T-cell (primary cell): ENCODE measurements at regions of chr1 and their contacts with region 1.

Region 1: GRCh38 chr1:27772933-27773825 is at the start of gene STX12:
- DNase-seq: peak; percentile 96 to 100 (median 98)
- ATAC-seq: peak; percentile 93 to 96 (median 94)
- H3K4me3 ChIP-seq: peak within 1 kb of the TSS; percentile 82 to 86
- H3K4me3 Mint-ChIP-seq: peak within 1 kb of the TSS; percentile 84 to 98 (median 93)
- H3K27ac ChIP-seq: peak within 1 kb of the TSS; percentile 91
- H3K27ac Mint-ChIP-seq: peak within 1 kb of the TSS; percentile 97 to 98
- H3K4me1 ChIP-seq: peaks cover 15 to 19% of the 10 kb centered on the region in 2 experiments
- H3K4me1 Mint-ChIP-seq: peaks cover 29 to 38% (median 36%) of the 10 kb centered on the region in 3 donors
- H3K27me3 ChIP-seq: no peaks in the 10 kb centered on the region
- H3K27me3 Mint-ChIP-seq: no peaks in the 10 kb centered on the region
- total RNA-seq, gene STX12: 21.2 to 31.4 (median 27.4) TPM

Region 2: DNA sequence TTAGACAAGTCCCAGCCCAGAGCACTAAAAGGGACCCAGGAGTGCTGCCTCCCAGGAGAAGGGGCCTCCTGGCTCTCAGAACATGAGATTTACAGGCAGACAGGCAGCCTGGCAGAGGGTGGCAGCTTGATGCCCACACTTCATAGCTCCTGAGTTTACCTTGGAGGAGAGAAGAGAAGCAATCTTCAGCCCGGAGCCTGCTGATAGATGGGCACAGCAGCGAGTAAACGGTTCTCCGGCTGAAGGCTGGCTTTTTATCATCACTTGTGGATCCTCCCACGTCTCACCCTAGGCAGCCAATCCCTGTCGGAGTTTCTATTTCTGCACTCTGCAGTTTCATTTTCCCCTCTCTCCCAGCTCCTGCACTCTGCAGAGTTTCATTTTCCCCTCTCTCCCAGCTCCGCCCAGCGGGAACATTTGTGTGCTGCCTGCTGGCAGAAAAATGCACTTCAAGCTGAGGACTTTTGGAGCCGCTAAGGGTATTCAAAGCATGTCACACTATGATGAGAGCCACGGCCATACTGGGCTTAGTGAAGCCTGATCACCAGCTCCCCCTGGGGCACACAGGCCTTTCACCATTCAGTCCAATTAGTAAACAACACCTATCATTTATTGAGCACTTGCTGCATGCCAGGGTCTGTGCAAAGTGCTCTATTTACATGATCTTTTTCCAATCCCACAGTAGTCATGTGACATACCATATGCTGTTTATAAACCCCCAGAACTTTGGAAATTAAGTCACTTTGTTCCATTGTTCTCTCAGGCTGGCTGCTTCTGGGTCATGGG is 101.0 kb before region 1 on chr1 and contains the start of gene IFI6:
- CTCF ChIA-PET with region 1: interaction called, 3 to 11 read pairs
- POLR2A ChIA-PET with region 1: no interaction called
- DNase-seq: peak; percentile 54 to 90 (median 71)
- ATAC-seq: peak; percentile 91 to 95 (median 93)
- H3K4me3 ChIP-seq: peak within 1 kb of the TSS; percentile 58 to 71
- H3K4me3 Mint-ChIP-seq: peak within 1 kb of the TSS; percentile 89 to 97 (median 95)
- H3K27ac ChIP-seq: peak within 1 kb of the TSS; percentile 91
- H3K27ac Mint-ChIP-seq: peak within 1 kb of the TSS; percentile 98 to 99
- H3K4me1 ChIP-seq: peaks cover 12 to 42% of the 10 kb centered on the region in 2 experiments
- H3K4me1 Mint-ChIP-seq: peaks cover 32 to 46% (median 43%) of the 10 kb centered on the region in 3 donors
- H3K27me3 ChIP-seq: no peaks in the 10 kb centered on the region
- H3K27me3 Mint-ChIP-seq: no peaks in the 10 kb centered on the region
- total RNA-seq, gene IFI6: 28.2 to 52.1 (median 40.7) TPM

Region 3: DNA sequence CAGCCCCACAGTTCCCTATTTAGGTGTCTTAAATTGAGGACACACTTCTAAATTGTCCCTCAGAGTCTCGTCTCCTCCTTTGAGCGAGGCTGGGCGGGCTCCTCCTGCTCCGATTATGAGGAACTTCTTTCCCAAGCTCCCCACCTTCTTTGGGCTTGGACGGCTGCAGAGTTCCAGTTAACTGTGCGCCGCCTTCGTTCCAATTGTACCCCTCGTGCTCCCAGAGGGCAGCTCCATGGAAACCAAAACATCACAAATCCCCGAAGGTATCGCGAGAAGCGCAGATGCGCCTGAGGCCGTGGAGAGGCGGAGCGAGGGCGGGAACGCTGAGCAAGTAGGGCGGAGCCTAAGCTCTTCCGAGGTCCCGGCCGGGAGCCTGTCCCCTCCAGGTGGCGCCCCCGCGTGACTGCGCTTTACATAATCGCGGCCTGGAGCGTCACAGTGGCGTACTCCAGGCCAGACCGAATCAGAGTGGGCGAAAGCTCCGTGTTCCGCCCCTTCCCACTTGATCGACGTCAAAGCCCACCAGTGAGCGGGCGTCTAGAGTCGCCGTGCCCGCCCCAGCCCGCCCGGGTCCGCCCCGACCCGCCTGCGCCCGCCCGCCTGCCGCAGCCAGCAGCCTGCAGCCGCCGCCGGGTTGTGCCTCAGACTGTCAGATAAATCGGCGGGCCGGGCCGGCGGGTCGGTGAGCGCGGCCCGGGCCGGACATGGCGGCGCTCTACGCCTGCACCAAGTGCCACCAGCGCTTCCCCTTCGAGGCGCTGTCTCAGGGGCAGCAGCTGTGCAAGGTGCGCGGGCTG is 47.6 kb before region 1 on chr1 and contains the start of gene FAM76A:
- CTCF ChIA-PET with region 1: interaction called in 1 of 2 experiments, 20 read pairs
- POLR2A ChIA-PET with region 1: interaction called, 3 to 25 read pairs
- DNase-seq: peak; percentile 98 to 100 (median 99)
- ATAC-seq: peak; percentile 91 to 97 (median 94)
- H3K4me3 ChIP-seq: peak within 1 kb of the TSS; percentile 72 to 81
- H3K4me3 Mint-ChIP-seq: peak within 1 kb of the TSS; percentile 84 to 87 (median 87)
- H3K27ac ChIP-seq: peak within 1 kb of the TSS; percentile 85
- H3K27ac Mint-ChIP-seq: peak within 1 kb of the TSS; percentile 95 to 96
- H3K4me1 ChIP-seq: peaks cover 4 to 17% of the 10 kb centered on the region in 2 experiments
- H3K4me1 Mint-ChIP-seq: peaks cover 23 to 28% (median 26%) of the 10 kb centered on the region in 3 donors
- H3K27me3 ChIP-seq: no peaks in the 10 kb centered on the region
- H3K27me3 Mint-ChIP-seq: no peaks in the 10 kb centered on the region
- total RNA-seq, gene FAM76A: 18.1 to 23.4 (median 21.2) TPM

Region 4: DNA sequence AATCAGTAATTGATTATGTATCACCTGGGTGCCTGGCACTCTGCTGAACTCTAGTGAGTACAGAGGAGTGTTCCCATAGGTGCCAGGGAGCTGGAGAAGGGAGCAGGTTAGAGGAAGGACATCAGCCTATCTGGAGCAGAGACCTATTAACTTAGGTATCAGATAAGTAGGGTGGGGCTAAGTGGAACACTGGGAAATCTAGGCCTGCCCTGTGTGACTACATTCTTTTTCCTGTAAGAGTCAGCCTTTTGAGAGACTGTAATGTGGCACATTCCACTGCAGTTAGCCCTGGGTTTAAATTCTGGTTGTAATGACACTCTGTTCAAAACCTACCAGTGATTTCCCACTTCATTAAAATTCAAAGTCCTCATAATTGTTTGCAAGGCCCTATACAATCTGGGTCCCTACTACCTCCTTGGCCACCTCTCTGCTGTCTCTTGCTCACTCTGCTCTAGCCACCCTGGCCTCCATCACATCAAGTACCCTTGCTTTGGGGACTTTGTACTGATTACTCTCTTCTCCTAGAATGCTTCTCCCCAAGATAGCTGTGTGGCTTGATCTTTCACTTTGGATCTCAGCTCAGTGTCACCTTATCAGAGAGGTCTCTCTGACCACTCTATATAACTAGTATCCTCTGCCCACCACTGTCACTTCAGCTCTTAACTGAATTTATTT is 12.7 kb after region 1 on chr1:
- CTCF ChIA-PET with region 1: interaction called in 1 of 2 experiments, 3 read pairs
- POLR2A ChIA-PET with region 1: interaction called in 1 of 2 experiments, 11 read pairs
- DNase-seq: no peak
- ATAC-seq: no peak
- H3K4me3 ChIP-seq: no peak overlapping the region
- H3K4me3 Mint-ChIP-seq: no peak overlapping the region
- H3K27ac ChIP-seq: no peak overlapping the region
- H3K27ac Mint-ChIP-seq: peak overlapping the region; percentile 20 to 75
- H3K4me1 ChIP-seq: no peaks in the 10 kb centered on the region
- H3K4me1 Mint-ChIP-seq: peaks cover 26% of the 10 kb centered on the region in 3 donors
- H3K27me3 ChIP-seq: no peaks in the 10 kb centered on the region
- H3K27me3 Mint-ChIP-seq: no peaks in the 10 kb centered on the region

Region 5: DNA sequence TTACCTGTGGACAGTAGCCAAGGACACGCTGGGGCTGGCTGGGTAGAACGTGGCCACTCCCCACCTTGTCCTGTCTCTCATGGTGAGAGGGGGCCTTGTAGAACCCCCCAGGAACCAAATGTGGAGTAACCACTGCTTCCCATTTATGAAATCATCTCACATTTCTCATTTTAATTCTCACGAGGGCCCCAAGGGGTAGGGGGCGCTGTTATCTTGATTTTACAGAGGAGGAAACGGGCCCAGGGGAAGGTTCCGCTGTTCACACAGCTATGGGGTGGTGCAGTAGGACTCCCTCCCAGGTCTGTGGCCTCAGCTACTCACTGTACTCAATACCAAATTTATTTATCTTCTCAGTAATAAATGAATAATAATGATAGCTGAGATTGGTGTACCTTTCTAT is 167.1 kb after region 1 on chr1:
- CTCF ChIA-PET with region 1: interaction called in 1 of 2 experiments, 10 read pairs
- POLR2A ChIA-PET with region 1: no interaction called
- DNase-seq: peak; percentile 58 to 84 (median 74)
- ATAC-seq: peak; percentile 80 to 89 (median 86)
- H3K4me3 ChIP-seq: no peak overlapping the region
- H3K4me3 Mint-ChIP-seq: no peak overlapping the region
- H3K27ac ChIP-seq: peak overlapping the region; percentile 52
- H3K27ac Mint-ChIP-seq: peak overlapping the region; percentile 77 to 79
- H3K4me1 ChIP-seq: peaks cover 11 to 31% of the 10 kb centered on the region in 2 experiments
- H3K4me1 Mint-ChIP-seq: peaks cover 24 to 51% (median 49%) of the 10 kb centered on the region in 3 donors
- H3K27me3 ChIP-seq: peaks cover 0 to 8% of the 10 kb centered on the region in 2 experiments
- H3K27me3 Mint-ChIP-seq: peaks cover 6 to 7% of the 10 kb centered on the region in 2 donors